Mammary epithelial cell (primary cell): ENCODE measurements at regions of chr12 and their contacts with region 1.

Region 1: GRCh38 chr12:6423267-6424007 is 21.3 kb upstream of the CD27 start:
- DNase-seq: peak; percentile 78
- H3K4me3 ChIP-seq: no peak overlapping the region
- H3K27ac ChIP-seq: no peak overlapping the region
- H3K4me1 ChIP-seq: no peaks in the 10 kb centered on the region
- H3K27me3 ChIP-seq: no peaks in the 10 kb centered on the region
- CTCF ChIP-seq: peak; percentile 87 to 90

Region 2: GRCh38 chr12:6250343-6250742 is 173.1 kb before region 1 on chr12:
- CTCF ChIA-PET with region 1: no interaction called
- dilution Hi-C with region 1: no loop called
- in situ Hi-C with region 1: no loop called
- intact Hi-C with region 1: no loop called
- DNase-seq: no peak
- H3K4me3 ChIP-seq: no peak overlapping the region
- H3K27ac ChIP-seq: no peak overlapping the region
- H3K4me1 ChIP-seq: peaks cover 17% of the 10 kb centered on the region
- H3K27me3 ChIP-seq: no peaks in the 10 kb centered on the region
- CTCF ChIP-seq: no peak

Region 3: GRCh38 chr12:6335451-6336078 is 87.9 kb before region 1 on chr12:
- CTCF ChIA-PET with region 1: interaction called, 4 read pairs
- dilution Hi-C with region 1: no loop called
- in situ Hi-C with region 1: no loop called
- intact Hi-C with region 1: loop called (anchors 1 kb)
- DNase-seq: peak; percentile 84
- H3K4me3 ChIP-seq: peak overlapping the region in 2 of 3 experiments; percentile 17 to 28
- H3K27ac ChIP-seq: peak overlapping the region; percentile 88
- H3K4me1 ChIP-seq: peaks cover 87% of the 10 kb centered on the region
- H3K27me3 ChIP-seq: no peaks in the 10 kb centered on the region
- CTCF ChIP-seq: peak; percentile 26 to 72

Region 4: DNA sequence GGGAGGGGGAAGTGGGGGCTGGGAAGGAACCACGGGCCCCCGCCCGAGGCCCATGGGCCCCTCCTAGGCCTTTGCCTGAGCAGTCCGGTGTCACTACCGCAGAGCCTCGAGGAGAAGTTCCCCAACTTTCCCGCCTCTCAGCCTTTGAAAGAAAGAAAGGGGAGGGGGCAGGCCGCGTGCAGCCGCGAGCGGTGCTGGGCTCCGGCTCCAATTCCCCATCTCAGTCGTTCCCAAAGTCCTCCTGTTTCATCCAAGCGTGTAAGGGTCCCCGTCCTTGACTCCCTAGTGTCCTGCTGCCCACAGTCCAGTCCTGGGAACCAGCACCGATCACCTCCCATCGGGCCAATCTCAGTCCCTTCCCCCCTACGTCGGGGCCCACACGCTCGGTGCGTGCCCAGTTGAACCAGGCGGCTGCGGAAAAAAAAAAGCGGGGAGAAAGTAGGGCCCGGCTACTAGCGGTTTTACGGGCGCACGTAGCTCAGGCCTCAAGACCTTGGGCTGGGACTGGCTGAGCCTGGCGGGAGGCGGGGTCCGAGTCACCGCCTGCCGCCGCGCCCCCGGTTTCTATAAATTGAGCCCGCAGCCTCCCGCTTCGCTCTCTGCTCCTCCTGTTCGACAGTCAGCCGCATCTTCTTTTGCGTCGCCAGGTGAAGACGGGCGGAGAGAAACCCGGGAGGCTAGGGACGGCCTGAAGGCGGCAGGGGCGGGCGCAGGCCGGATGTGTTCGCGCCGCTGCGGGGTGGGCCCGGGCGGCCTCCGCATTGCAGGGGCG is 110.7 kb after region 1 on chr12 and contains the start of gene GAPDH:
- CTCF ChIA-PET with region 1: no interaction called
- dilution Hi-C with region 1: no loop called
- in situ Hi-C with region 1: no loop called
- intact Hi-C with region 1: loop called (anchors 1 kb)
- DNase-seq: peak; percentile 97
- H3K4me3 ChIP-seq: peak within 1 kb of the TSS; percentile 64 to 92 (median 91)
- H3K27ac ChIP-seq: peak within 1 kb of the TSS; percentile 91
- H3K4me1 ChIP-seq: peaks cover 47% of the 10 kb centered on the region
- H3K27me3 ChIP-seq: no peaks in the 10 kb centered on the region
- CTCF ChIP-seq: no peak
- total RNA-seq, gene GAPDH: 6,493 to 13,434 TPM

Region 5: GRCh38 chr12:6554168-6555017 is 131.0 kb after region 1 on chr12:
- CTCF ChIA-PET with region 1: no interaction called
- dilution Hi-C with region 1: no loop called
- in situ Hi-C with region 1: loop called (anchors 10 kb)
- intact Hi-C with region 1: loop called (anchors 1 kb)
- DNase-seq: no peak
- H3K4me3 ChIP-seq: peak overlapping the region in 1 of 3 experiments; percentile 49
- H3K27ac ChIP-seq: no peak overlapping the region
- H3K4me1 ChIP-seq: peaks cover 36% of the 10 kb centered on the region
- H3K27me3 ChIP-seq: no peaks in the 10 kb centered on the region
- CTCF ChIP-seq: peak; percentile 54